ENCODE measurements at regions of chr21 and their contacts with region 1.

Region 1: GRCh38 chr21:38048167-38048566 is 131.9 kb upstream of the KCNJ6 start:
- DNase-seq: no peak
- ATAC-seq: no peak
- H3K4me3 ChIP-seq: no peak overlapping the region
- H3K27ac ChIP-seq: no peak overlapping the region
- H3K4me1 ChIP-seq: no peaks in the 10 kb centered on the region
- H3K27me3 ChIP-seq: no peaks in the 10 kb centered on the region
- CTCF ChIP-seq: no peak
- EP300 ChIP-seq: no peak
- POLR2A ChIP-seq: no peak
- RAD21 ChIP-seq: no peak

Region 2: DNA sequence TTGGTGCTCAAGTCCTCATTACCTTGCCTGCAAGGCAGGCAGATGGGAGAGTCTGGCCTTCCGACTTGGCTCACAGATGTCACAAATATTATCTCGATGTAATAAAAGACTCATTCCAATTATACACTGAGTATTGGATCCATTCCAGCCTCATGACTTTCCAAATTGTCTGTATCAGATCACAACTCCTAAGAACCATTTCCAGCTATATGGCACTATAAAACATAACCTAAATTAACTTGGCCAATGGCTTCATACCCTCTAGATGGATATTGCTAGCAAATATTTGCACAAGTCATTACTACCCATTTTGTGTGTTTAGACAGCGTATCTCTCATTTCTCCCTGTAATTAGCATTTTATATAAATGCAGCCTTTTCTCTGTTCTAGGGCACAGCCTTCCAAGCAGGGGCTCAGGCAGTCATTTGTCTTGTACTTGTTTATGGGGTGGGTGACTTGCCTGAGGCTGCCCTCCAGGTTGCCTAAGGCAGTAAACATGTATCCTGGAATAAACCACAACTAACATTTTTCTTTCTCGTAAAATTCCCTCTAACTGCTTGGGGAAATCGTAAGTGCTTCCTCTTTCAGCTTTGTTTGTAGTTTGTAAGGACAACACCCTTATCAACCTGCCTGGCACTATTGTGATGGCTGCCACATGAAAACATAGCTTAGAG is 61.3 kb before region 1 on chr21:
- CTCF ChIA-PET with region 1: no interaction called
- POLR2A ChIA-PET with region 1: no interaction called
- in situ Hi-C with region 1: loop called (anchors 10 kb)
- intact Hi-C with region 1: no loop called
- DNase-seq: no peak
- ATAC-seq: no peak
- H3K4me3 ChIP-seq: no peak overlapping the region
- H3K27ac ChIP-seq: no peak overlapping the region
- H3K4me1 ChIP-seq: no peaks in the 10 kb centered on the region
- H3K27me3 ChIP-seq: no peaks in the 10 kb centered on the region
- CTCF ChIP-seq: no peak
- EP300 ChIP-seq: no peak
- POLR2A ChIP-seq: no peak
- RAD21 ChIP-seq: no peak

Region 3: GRCh38 chr21:38205940-38206339 is 157.8 kb after region 1 on chr21:
- CTCF ChIA-PET with region 1: no interaction called
- POLR2A ChIA-PET with region 1: no interaction called
- in situ Hi-C with region 1: no loop called
- intact Hi-C with region 1: no loop called
- DNase-seq: no peak
- ATAC-seq: no peak
- H3K4me3 ChIP-seq: no peak overlapping the region
- H3K27ac ChIP-seq: no peak overlapping the region
- H3K4me1 ChIP-seq: no peaks in the 10 kb centered on the region
- H3K27me3 ChIP-seq: no peaks in the 10 kb centered on the region; a peak in 1 of 5 replicates
- CTCF ChIP-seq: no peak
- EP300 ChIP-seq: no peak
- POLR2A ChIP-seq: no peak
- RAD21 ChIP-seq: no peak